CD8-positive, alpha-beta T cell (primary cell): ENCODE measurements at regions of chr4 and their contacts with region 1.

Region 1: DNA sequence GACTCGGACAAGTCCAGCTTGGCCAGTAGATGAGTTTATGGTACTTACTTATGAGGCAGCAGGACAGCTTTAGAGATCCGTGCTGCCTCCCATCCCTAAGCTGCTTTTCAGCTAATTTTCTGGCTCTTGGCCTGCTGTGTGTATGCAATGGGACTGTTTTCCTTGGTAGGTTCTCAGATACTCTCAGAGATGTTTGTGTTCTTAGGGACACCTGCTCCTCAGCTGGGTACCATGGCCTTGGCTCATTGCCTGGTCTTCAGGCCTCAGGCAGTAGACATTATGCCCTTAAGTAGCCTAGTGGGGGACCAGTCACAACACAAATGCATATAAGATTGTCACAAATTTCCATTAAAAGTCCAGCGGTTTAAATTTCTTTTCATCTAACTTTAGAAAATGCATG is 688.0 kb downstream of the PCDH7 start:
- DNase-seq: no peak
- ATAC-seq: no peak
- H3K4me3 ChIP-seq: no peak overlapping the region
- H3K4me3 Mint-ChIP-seq: no peak overlapping the region
- H3K27ac ChIP-seq: no peak overlapping the region
- H3K27ac Mint-ChIP-seq: no peak overlapping the region
- H3K4me1 ChIP-seq: no peaks in the 10 kb centered on the region
- H3K4me1 Mint-ChIP-seq: no peaks in the 10 kb centered on the region
- H3K27me3 ChIP-seq: no peaks in the 10 kb centered on the region
- H3K27me3 Mint-ChIP-seq: no peaks in the 10 kb centered on the region
- CTCF ChIP-seq: no peak

Region 2: GRCh38 chr4:31141095-31141831 is 266.9 kb before region 1 on chr4:
- CTCF ChIA-PET with region 1: no interaction called
- POLR2A ChIA-PET with region 1: no interaction called
- intact Hi-C with region 1: no loop called
- DNase-seq: no peak
- ATAC-seq: no peak
- H3K4me3 ChIP-seq: no peak overlapping the region
- H3K4me3 Mint-ChIP-seq: no peak overlapping the region
- H3K27ac ChIP-seq: no peak overlapping the region
- H3K27ac Mint-ChIP-seq: no peak overlapping the region
- H3K4me1 ChIP-seq: no peaks in the 10 kb centered on the region
- H3K4me1 Mint-ChIP-seq: no peaks in the 10 kb centered on the region
- H3K27me3 ChIP-seq: no peaks in the 10 kb centered on the region
- H3K27me3 Mint-ChIP-seq: no peaks in the 10 kb centered on the region
- CTCF ChIP-seq: no peak

Region 3: GRCh38 chr4:31324814-31325213 is 83.3 kb before region 1 on chr4:
- CTCF ChIA-PET with region 1: no interaction called
- POLR2A ChIA-PET with region 1: no interaction called
- intact Hi-C with region 1: no loop called
- DNase-seq: no peak
- ATAC-seq: no peak
- H3K4me3 ChIP-seq: no peak overlapping the region
- H3K4me3 Mint-ChIP-seq: no peak overlapping the region
- H3K27ac ChIP-seq: no peak overlapping the region
- H3K27ac Mint-ChIP-seq: no peak overlapping the region
- H3K4me1 ChIP-seq: no peaks in the 10 kb centered on the region
- H3K4me1 Mint-ChIP-seq: no peaks in the 10 kb centered on the region
- H3K27me3 ChIP-seq: no peaks in the 10 kb centered on the region
- H3K27me3 Mint-ChIP-seq: no peaks in the 10 kb centered on the region
- CTCF ChIP-seq: no peak

Region 4: DNA sequence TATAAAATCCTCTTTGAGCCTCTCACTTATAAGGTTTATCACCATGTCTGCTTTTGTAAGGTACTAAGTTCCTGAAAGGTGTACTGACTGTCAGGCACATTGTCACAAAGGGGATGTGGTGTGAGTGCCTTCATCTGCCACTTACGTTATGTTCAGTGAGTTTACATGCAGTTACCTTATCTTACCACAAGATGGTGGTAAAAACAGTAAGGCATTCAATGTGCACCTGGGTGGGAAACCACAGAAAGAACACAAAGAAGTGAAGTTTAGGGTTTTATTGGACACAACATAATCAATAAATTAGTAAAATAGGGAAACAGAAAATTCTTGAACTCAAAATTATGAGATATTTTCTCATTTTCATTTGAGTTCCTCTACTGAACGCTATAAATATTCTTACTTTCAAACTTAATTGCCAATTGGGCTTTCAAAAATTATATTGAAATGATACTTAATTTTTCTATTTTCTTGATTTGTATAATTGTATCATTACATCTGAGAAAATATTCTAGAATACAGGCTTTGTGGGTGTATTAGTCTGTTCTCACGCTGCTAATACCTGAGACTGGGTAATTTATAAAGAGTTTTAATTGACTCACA is 37.2 kb before region 1 on chr4:
- CTCF ChIA-PET with region 1: no interaction called
- POLR2A ChIA-PET with region 1: no interaction called
- intact Hi-C with region 1: no loop called
- DNase-seq: peak in 2 of 9 experiments; percentile 3 to 19
- ATAC-seq: peak; percentile 40
- H3K4me3 ChIP-seq: no peak overlapping the region
- H3K4me3 Mint-ChIP-seq: no peak overlapping the region
- H3K27ac ChIP-seq: no peak overlapping the region
- H3K27ac Mint-ChIP-seq: no peak overlapping the region
- H3K4me1 ChIP-seq: no peaks in the 10 kb centered on the region
- H3K4me1 Mint-ChIP-seq: no peaks in the 10 kb centered on the region
- H3K27me3 ChIP-seq: no peaks in the 10 kb centered on the region
- H3K27me3 Mint-ChIP-seq: no peaks in the 10 kb centered on the region
- CTCF ChIP-seq: peak; percentile 51

Region 5: DNA sequence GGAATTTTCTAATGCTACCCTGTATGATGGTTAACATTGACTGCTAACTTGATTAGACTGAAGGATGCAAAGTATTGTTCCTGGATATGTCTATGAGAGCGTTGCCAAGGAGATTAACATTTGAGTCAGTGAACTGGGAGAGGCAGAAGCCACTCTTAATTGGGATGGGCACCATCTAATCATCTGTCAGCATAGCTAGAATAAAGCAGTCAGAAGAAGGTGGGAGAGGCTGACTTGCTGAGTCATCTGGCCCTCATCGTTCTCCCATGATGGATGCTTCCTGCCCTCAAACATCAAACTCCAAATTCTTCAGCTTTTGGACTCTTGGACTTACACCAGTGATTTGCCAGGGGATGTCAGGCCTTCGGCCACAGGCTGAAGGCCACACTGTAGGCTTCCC is 190.5 kb after region 1 on chr4:
- CTCF ChIA-PET with region 1: no interaction called
- POLR2A ChIA-PET with region 1: no interaction called
- intact Hi-C with region 1: loop called in 1 of 2 experiments (anchors 5 kb)
- DNase-seq: no peak
- ATAC-seq: no peak
- H3K4me3 ChIP-seq: no peak overlapping the region
- H3K4me3 Mint-ChIP-seq: no peak overlapping the region
- H3K27ac ChIP-seq: no peak overlapping the region
- H3K27ac Mint-ChIP-seq: no peak overlapping the region
- H3K4me1 ChIP-seq: no peaks in the 10 kb centered on the region
- H3K4me1 Mint-ChIP-seq: no peaks in the 10 kb centered on the region
- H3K27me3 ChIP-seq: no peaks in the 10 kb centered on the region
- H3K27me3 Mint-ChIP-seq: no peaks in the 10 kb centered on the region
- CTCF ChIP-seq: no peak